ENCODE measurements at regions of chr10 and their contacts with region 1.

Region 1: GRCh38 chr10:112471878-112472487 is 25.0 kb downstream of the VTI1A start:
- DNase-seq: peak in 1 of 2 experiments; percentile 21
- H3K4me3 ChIP-seq: no peak overlapping the region
- H3K4me3 Mint-ChIP-seq: no peak overlapping the region
- H3K27ac Mint-ChIP-seq: no peak overlapping the region
- H3K4me1 ChIP-seq: peaks cover 8% of the 10 kb centered on the region; the same call in 1 of the 2 replicates
- H3K4me1 Mint-ChIP-seq: no peaks in the 10 kb centered on the region
- H3K27me3 ChIP-seq: no peaks in the 10 kb centered on the region
- H3K27me3 Mint-ChIP-seq: no peaks in the 10 kb centered on the region
- CTCF ChIP-seq: peak; percentile 48 to 68

Region 2: DNA sequence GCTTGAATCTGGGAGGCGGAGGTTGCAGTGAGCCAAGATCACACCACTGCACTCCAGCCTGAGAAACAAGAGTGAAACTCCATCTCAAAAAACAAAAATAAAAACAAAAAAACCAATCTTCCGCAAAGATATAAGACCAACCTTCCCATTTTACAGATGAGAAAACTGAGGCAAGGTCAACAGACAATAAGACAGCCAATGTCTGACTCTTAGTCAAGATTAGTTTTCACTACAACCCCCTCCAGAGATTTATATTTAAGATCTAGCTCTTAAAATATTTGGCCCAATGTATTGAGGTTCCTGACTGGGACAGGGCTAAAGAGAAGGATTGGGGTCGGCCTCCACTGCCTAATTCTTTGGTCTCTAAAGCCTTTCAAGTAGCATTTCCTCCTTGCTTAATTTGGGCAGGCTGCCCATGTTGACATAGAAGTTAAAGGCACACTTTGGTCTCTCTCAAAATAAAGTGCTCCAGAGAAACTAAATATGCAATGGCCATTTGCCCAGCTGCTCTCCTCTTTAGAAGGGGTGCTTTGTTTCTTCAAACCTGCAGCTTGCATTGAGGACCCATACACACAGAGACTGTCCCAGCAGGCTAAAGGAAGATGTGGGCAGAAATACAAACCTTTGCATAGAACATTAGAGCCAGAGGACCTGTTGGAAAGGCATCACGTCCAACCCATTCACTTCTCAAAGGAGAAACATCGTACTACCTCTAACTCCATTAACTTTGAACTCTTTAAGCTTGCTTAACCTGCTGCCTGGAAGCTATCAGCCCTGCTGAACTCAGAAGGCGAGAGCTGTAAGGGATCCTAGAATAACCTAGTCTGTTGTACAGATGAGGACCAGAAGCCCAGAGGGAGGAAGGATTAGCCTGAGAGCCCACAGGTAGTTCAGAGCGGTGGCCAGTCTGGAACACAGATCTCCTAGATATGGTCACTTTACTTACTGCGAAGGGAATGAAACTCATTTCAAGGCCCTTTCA is 184.9 kb before region 1 on chr10:
- CTCF ChIA-PET with region 1: no interaction called
- POLR2A ChIA-PET with region 1: no interaction called
- intact Hi-C with region 1: no loop called
- DNase-seq: no peak
- H3K4me3 ChIP-seq: no peak overlapping the region
- H3K4me3 Mint-ChIP-seq: no peak overlapping the region
- H3K27ac Mint-ChIP-seq: no peak overlapping the region
- H3K4me1 ChIP-seq: no peaks in the 10 kb centered on the region
- H3K4me1 Mint-ChIP-seq: no peaks in the 10 kb centered on the region
- H3K27me3 ChIP-seq: no peaks in the 10 kb centered on the region
- H3K27me3 Mint-ChIP-seq: no peaks in the 10 kb centered on the region
- CTCF ChIP-seq: no peak

Region 3: DNA sequence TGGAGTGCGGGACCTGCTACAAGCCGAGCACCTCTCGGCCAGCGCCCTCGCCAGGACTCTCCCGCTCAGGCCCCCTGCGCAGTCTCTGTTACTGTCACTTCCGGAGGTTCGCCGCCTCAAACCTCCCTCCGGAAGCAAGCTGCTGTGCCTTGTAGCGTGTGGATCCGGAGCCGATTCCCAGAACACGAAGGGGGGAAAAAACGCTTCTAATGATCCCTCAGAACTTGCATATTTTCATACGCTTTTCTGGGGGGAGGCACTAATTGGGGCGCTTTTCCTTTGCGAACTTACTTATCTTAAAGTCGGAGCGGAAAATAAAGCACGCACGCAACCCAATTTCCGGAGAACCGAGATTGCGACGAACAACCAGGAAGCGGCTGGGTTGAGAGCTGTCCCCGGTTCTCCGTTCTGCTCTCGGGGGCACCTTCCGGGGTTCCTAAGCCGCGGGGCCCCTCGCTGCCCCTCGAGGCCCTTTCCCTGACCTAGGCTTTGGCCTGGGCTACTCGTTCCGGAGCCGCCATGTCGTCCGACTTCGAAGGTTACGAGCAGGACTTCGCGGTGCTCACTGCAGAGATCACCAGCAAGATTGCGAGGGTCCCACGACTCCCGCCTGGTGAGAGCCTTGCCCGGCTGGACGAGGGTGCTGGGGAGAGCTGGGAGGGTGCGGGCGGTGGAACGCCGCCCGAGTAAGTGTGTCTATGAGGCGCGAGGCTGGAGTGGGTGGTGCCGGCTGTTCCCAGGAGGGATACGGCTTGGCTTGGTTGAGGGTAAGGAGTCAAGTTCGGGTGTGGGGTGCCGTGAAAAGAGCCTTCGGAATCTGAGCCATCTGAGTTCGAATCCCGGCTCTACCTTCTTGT is 24.9 kb before region 1 on chr10 and contains the starts of genes VTI1A and ZDHHC6:
- CTCF ChIA-PET with region 1: interaction called, 8 read pairs
- POLR2A ChIA-PET with region 1: interaction called, 4 read pairs
- intact Hi-C with region 1: loop called (anchors 2 kb)
- DNase-seq: peak; percentile 90
- H3K4me3 ChIP-seq: peak within 1 kb of the TSS; percentile 81
- H3K4me3 Mint-ChIP-seq: peak within 1 kb of the TSS; percentile 94
- H3K27ac Mint-ChIP-seq: peak within 1 kb of the TSS; percentile 88
- H3K4me1 ChIP-seq: peaks cover 7% of the 10 kb centered on the region; the same call in 1 of the 2 replicates
- H3K4me1 Mint-ChIP-seq: no peaks in the 10 kb centered on the region
- H3K27me3 ChIP-seq: no peaks in the 10 kb centered on the region
- H3K27me3 Mint-ChIP-seq: no peaks in the 10 kb centered on the region
- CTCF ChIP-seq: peak; percentile 27 to 63
- total RNA-seq, gene VTI1A: 42.3 and 45.6 TPM in 2 replicates
- total RNA-seq, gene ZDHHC6: 47.4 and 48.8 TPM in 2 replicates

Region 4: GRCh38 chr10:112490545-112490944 is 18.6 kb after region 1 on chr10:
- CTCF ChIA-PET with region 1: interaction called, 11 read pairs
- POLR2A ChIA-PET with region 1: no interaction called
- intact Hi-C with region 1: no loop called
- DNase-seq: peak; percentile 42 to 49
- H3K4me3 ChIP-seq: no peak overlapping the region
- H3K4me3 Mint-ChIP-seq: peak overlapping the region; percentile 2
- H3K27ac Mint-ChIP-seq: peak overlapping the region; percentile 53
- H3K4me1 ChIP-seq: peaks cover 31% of the 10 kb centered on the region
- H3K4me1 Mint-ChIP-seq: peaks cover 12% of the 10 kb centered on the region
- H3K27me3 ChIP-seq: no peaks in the 10 kb centered on the region
- H3K27me3 Mint-ChIP-seq: no peaks in the 10 kb centered on the region
- CTCF ChIP-seq: no peak